ENCODE measurements at regions of chr1 and their contacts with region 1.

Region 1: GRCh38 chr1:165877940-165878556 is 50.6 kb downstream of the UCK2 start:
- DNase-seq: no peak
- H3K4me3 Mint-ChIP-seq: no peak overlapping the region
- H3K27ac Mint-ChIP-seq: peak overlapping the region; percentile 3
- H3K4me1 Mint-ChIP-seq: peaks cover 71% of the 10 kb centered on the region
- H3K27me3 Mint-ChIP-seq: no peaks in the 10 kb centered on the region
- CTCF ChIP-seq: no peak

Region 2: GRCh38 chr1:165768513-165769394 is 109.3 kb before region 1 on chr1 and contains the start of gene TMCO1:
- CTCF ChIA-PET with region 1: interaction called, 3 read pairs
- intact Hi-C with region 1: loop called (anchors 2 kb)
- DNase-seq: peak; percentile 95
- H3K4me3 Mint-ChIP-seq: peak within 1 kb of the TSS; percentile 97
- H3K27ac Mint-ChIP-seq: peak within 1 kb of the TSS; percentile 97
- H3K4me1 Mint-ChIP-seq: peaks cover 45% of the 10 kb centered on the region
- H3K27me3 Mint-ChIP-seq: no peaks in the 10 kb centered on the region
- CTCF ChIP-seq: no peak
- total RNA-seq, gene TMCO1: 145 and 157 TPM in 2 replicates

Region 3: DNA sequence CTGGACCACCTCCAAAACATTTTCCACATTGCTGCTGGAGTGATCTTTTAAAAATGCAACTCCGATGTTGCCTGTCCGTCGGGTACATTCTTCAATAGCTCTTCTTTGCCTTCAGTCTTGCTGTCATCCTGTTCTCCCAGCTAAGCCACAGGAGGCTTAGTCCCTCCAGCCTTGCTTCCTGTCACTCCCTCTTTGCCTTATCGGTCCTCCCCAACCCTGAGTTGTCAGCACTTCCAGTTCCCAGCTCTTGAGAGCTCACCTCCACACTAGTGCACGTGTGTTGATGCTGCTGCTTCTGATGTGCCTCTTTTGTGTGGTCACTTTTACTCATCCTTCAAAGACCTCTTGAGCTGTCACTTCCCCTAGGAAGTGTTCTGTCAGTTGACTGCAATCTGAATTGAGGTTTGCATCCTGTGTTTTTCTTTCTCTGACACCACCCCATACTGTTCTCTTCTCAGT is 35.3 kb before region 1 on chr1:
- CTCF ChIA-PET with region 1: interaction called, 3 read pairs
- intact Hi-C with region 1: loop called (anchors 5 kb)
- DNase-seq: peak; percentile 23
- H3K4me3 Mint-ChIP-seq: peak overlapping the region; percentile 9
- H3K27ac Mint-ChIP-seq: peak overlapping the region; percentile 23
- H3K4me1 Mint-ChIP-seq: peaks cover 64% of the 10 kb centered on the region
- H3K27me3 Mint-ChIP-seq: no peaks in the 10 kb centered on the region
- CTCF ChIP-seq: no peak

Measured in Calu3 (cell line).